Aorta (tissue), 5 donors: ENCODE measurements at regions of chr1 and their contacts with region 1.

Region 1: DNA sequence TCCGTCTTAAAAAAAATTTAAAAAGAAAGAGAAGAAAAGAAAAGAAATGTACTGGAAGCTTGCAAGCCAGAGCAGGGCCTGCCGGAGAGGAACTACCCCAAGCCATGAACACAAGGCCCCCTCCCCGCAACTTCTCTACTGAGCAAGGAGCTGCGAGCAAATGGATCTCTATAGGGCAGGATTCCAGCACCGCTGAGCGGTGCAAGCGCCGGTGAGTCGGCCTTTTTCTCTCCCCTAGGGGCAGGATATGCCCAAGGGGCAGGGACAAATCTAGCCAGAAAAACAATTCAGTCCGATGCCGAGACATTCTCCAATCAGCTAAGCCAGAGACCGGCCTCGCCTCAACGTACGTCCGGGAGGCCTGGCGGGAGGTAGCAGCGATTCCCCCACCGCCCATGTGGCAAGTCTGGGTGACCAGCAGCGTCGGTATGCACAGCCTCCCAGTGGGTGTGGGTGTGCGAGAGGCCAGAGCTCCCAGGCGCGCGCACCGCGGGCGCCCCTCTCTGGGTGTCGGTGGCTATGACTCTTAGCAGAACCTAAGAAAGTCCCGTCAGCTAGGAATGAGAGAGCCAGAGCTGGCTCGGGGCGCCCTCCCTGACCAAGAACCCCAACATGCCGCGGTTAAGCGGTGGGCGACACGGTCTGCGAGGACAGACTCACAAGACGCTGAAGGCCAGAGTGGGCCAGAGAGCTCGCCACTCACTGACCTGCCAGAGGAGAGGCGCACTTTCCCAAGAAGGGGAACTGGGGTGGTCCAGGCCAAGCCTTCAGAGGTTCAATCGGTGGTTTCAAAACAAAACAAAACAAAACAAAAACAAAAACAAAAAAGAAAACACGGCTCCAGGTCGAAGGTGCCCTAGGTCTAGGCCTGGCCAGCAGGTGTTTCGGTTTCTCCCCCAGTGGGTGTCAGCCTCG is 1.9 kb downstream of the CSMD2 start:
- DNase-seq: peak; percentile 86 to 93
- ATAC-seq: peak; percentile 93
- H3K4me3 ChIP-seq: peak overlapping the region; percentile 2 to 51
- H3K27ac ChIP-seq: no peak overlapping the region
- H3K4me1 ChIP-seq: no peaks in the 10 kb centered on the region
- H3K27me3 ChIP-seq: no peaks in the 10 kb centered on the region

Region 2: DNA sequence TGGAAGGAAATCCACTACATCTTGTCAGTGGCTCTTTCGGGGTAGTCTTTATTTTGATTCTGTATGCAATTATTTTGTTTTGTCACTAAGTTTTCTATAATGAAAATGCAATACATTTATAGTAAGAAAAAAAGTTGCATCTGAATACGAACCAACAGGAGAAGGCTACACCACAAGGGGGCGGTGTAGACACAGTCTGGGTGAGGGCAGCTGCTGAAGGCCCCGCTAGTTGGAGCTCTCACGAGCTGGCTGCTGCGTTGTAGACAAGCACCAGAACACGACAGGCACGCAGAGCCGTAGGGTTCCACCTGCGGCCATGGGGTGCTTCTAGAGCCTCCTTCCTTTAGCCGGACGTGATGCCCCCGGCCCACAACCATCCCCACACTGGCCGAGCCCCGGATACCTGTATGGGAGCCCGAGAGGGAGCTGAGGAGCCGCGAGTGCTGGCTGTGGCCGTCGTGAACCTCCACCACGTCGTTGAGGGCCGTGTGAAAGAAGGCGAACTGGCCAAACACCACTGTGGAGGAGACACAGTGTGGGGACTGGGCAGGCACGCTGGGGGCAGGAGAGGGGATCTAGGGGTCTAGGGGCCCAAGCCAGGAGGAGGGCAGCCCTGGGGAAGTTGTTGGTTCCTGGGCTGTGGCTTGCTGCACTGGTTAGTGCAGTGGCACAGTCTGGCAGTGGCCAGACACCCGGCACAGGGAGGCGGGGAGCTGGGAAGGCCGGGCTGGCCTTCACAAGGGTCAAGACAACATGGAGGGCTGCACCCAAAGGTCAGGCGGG is 529.9 kb before region 1 on chr1:
- intact Hi-C with region 1: loop called (anchors 5 kb)
- DNase-seq: peak; percentile 93 to 96
- ATAC-seq: peak; percentile 90
- H3K4me3 ChIP-seq: no peak overlapping the region
- H3K27ac ChIP-seq: no peak overlapping the region
- H3K4me1 ChIP-seq: no peaks in the 10 kb centered on the region
- H3K27me3 ChIP-seq: no peaks in the 10 kb centered on the region

Region 3: DNA sequence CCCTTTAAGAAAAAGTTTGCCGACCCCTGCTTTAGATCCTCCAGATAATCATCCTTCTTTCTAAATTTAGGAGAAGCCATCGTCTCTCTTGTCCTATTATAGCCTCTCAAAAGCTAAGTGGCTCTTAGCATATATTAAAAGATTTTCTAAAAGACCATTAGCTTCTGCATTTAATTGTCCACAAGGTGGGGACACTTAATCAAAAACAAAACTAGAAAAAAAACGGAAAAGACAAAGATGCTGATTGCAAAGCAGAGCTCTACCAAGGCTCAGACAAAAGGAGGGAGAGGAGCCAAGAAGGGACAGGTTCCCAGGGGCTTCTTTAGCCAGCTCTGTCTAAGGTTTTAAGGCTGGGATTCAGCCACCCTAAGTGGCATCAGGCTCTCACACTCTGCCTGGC is 427.5 kb before region 1 on chr1:
- intact Hi-C with region 1: loop called (anchors 5 kb)
- DNase-seq: no peak
- ATAC-seq: no peak
- H3K4me3 ChIP-seq: no peak overlapping the region
- H3K27ac ChIP-seq: no peak overlapping the region
- H3K4me1 ChIP-seq: no peaks in the 10 kb centered on the region
- H3K27me3 ChIP-seq: no peaks in the 10 kb centered on the region

Region 4: GRCh38 chr1:33758698-33759097 is 404.4 kb before region 1 on chr1:
- intact Hi-C with region 1: loop called in 1 of 2 experiments (anchors 5 kb)
- DNase-seq: no peak
- ATAC-seq: peak; percentile 75
- H3K4me3 ChIP-seq: no peak overlapping the region
- H3K27ac ChIP-seq: no peak overlapping the region
- H3K4me1 ChIP-seq: peaks cover 11 to 13% of the 10 kb centered on the region in 2 donors
- H3K27me3 ChIP-seq: no peaks in the 10 kb centered on the region

Region 5: GRCh38 chr1:33876970-33877650 is 286.0 kb before region 1 on chr1:
- intact Hi-C with region 1: loop called in 1 of 2 experiments (anchors 10 kb)
- DNase-seq: peak; percentile 83 to 90
- ATAC-seq: no peak
- H3K4me3 ChIP-seq: no peak overlapping the region
- H3K27ac ChIP-seq: no peak overlapping the region
- H3K4me1 ChIP-seq: peaks cover 0 to 11% of the 10 kb centered on the region in 2 donors
- H3K27me3 ChIP-seq: no peaks in the 10 kb centered on the region

Region 6: DNA sequence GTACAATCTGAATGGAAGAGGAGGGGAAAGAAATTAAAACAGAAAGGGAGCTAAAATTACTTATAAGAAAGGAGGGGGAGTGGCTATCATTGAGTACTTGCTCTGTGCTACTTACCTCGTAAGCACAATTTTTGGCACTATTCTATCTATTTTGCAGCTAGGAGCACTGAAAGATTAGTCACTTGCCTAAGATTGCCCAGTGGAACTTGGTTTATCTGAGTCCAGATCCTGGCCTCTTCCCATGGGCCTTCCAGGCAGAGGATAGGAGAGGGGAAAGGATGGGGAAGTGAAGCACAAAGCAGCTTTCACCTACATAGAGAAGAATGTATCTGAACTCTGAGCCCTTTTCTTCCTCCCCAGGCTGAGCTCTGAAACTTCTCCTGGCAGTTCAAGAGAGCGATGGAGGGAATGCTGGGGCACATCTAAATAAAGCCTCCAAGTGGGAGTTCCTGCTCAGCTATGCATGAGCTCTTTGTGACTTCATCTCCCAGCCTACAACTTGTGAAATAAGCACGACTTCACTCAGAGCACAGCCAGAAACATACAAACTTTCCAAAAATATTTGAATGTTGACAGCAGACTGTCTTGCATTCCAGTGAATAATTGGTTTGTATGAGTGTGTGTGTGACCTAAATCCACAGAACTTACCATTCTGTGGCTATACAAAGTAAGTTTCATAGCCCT is 269.8 kb before region 1 on chr1:
- intact Hi-C with region 1: loop called in 1 of 2 experiments (anchors 10 kb)
- DNase-seq: no peak
- ATAC-seq: peak; percentile 92
- H3K4me3 ChIP-seq: no peak overlapping the region
- H3K27ac ChIP-seq: peak overlapping the region; percentile 97 to 98
- H3K4me1 ChIP-seq: peaks cover 0 to 5% of the 10 kb centered on the region in 2 donors
- H3K27me3 ChIP-seq: no peaks in the 10 kb centered on the region

Region 7: DNA sequence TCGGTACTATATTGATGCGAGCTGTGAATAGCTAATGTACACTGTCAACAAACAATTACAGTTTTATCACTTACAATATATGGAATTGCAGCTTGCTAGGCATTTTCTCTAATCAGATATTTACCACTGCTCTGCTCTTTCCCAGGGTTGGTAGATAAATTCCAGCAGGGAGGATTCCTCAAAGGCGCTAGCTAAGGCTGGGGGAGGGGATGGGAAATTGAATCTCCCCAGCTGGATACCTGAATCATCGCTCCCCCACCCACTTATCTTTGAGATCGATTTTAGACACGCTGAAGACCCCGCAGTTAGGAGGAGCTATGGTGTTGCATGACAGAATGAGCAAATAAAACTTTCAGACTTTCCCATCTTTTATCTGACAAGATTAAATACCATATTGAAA is 125.3 kb before region 1 on chr1:
- intact Hi-C with region 1: no loop called
- DNase-seq: no peak
- ATAC-seq: no peak
- H3K4me3 ChIP-seq: no peak overlapping the region
- H3K27ac ChIP-seq: no peak overlapping the region
- H3K4me1 ChIP-seq: no peaks in the 10 kb centered on the region
- H3K27me3 ChIP-seq: no peaks in the 10 kb centered on the region

Region 8: GRCh38 chr1:34885405-34886247 is 722.5 kb after region 1 on chr1:
- intact Hi-C with region 1: no loop called
- DNase-seq: peak; percentile 59 to 85
- ATAC-seq: peak; percentile 55
- H3K4me3 ChIP-seq: no peak overlapping the region
- H3K27ac ChIP-seq: no peak overlapping the region
- H3K4me1 ChIP-seq: no peaks in the 10 kb centered on the region
- H3K27me3 ChIP-seq: no peaks in the 10 kb centered on the region